ENCODE measurements at regions of chr6 and their contacts with region 1.

Region 1: DNA sequence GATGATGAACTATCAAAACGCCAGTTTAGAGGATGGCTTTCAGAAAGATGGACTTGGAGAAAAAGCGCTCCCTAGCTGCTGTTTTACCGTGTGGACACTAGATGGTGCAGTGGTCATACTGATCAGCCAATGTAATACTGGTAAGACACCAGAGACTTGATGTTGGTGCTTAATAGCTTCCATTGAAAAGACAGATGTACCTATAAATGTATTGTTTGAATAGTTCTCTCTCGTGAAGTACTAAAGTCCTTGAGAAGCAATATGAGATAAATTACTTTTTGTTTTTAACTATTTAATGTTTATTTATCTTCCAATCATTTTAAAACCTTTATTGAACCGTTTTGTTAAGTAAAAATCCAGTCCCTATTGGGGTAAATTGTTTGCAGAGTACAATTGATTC is 63.9 kb upstream of the FUCA2 start:
- DNase-seq: peak; percentile 78
- H3K4me3 ChIP-seq: no peak overlapping the region
- H3K27ac ChIP-seq: no peak overlapping the region
- H3K4me1 ChIP-seq: peaks cover 12% of the 10 kb centered on the region
- H3K27me3 ChIP-seq: no peaks in the 10 kb centered on the region
- CTCF ChIP-seq: peak; percentile 61 to 71
- POLR2A ChIP-seq: no peak

Region 2: DNA sequence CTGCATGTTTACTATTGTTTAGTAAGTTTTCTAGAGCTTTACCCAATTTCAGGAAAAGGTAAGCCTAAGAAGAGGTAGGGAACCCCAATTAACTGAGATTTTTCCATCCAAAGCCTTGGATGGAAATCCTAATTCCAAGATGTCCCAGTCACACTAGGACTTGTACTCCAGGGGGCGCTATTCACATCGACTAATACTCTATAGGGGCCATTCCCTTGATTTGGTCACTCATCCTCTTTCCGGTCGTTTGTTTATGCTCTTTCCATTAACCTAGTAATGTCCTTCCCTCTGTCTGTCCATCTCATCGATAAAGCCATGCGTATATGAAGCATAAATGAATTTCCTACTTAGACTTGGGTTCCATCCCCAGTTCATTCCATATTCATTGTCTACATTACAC is 16.9 kb after region 1 on chr6:
- CTCF ChIA-PET with region 1: interaction called, 16 read pairs
- POLR2A ChIA-PET with region 1: no interaction called
- dilution Hi-C with region 1: no loop called
- intact Hi-C with region 1: no loop called
- DNase-seq: no peak
- H3K4me3 ChIP-seq: no peak overlapping the region
- H3K27ac ChIP-seq: no peak overlapping the region
- H3K4me1 ChIP-seq: no peaks in the 10 kb centered on the region
- H3K27me3 ChIP-seq: no peaks in the 10 kb centered on the region
- CTCF ChIP-seq: peak; percentile 13 to 24
- POLR2A ChIP-seq: no peak

Region 3: GRCh38 chr6:143734641-143735063 is 159.2 kb after region 1 on chr6:
- CTCF ChIA-PET with region 1: interaction called, 6 read pairs
- POLR2A ChIA-PET with region 1: no interaction called
- dilution Hi-C with region 1: no loop called
- intact Hi-C with region 1: loop called (anchors 5 kb)
- DNase-seq: peak; percentile 82
- H3K4me3 ChIP-seq: no peak overlapping the region
- H3K27ac ChIP-seq: no peak overlapping the region
- H3K4me1 ChIP-seq: peaks cover 24% of the 10 kb centered on the region
- H3K27me3 ChIP-seq: no peaks in the 10 kb centered on the region
- CTCF ChIP-seq: no peak
- POLR2A ChIP-seq: peak; percentile 57

Region 4: DNA sequence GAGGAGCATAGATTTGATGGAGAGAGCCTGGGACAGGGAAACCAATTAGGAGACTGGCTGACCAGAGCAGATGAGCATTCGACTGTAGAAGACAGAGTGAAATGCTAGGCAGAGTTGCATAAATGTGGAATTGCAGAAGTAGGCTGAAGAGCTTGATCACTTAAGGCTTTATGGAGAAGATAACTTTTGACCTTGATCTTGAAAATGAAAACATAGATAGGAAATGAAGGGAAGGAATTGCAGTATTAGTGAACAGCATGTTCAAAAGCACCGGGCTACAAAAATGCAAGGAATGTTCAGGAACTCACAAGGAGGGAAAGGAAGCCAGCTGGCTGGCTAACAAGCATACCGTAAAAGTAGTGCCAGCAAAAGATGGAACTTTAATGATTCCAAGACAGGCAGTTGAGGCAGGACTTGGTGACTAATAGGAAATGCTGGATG is 247.2 kb after region 1 on chr6:
- CTCF ChIA-PET with region 1: interaction called, 34 read pairs
- POLR2A ChIA-PET with region 1: no interaction called
- dilution Hi-C with region 1: no loop called
- intact Hi-C with region 1: loop called (anchors 2 kb)
- DNase-seq: peak; percentile 93
- H3K4me3 ChIP-seq: no peak overlapping the region
- H3K27ac ChIP-seq: peak overlapping the region; percentile 93
- H3K4me1 ChIP-seq: peaks cover 54% of the 10 kb centered on the region
- H3K27me3 ChIP-seq: no peaks in the 10 kb centered on the region
- CTCF ChIP-seq: no peak
- POLR2A ChIP-seq: peak; percentile 57

Region 5: GRCh38 chr6:143940011-143940597 is 364.7 kb after region 1 on chr6:
- CTCF ChIA-PET with region 1: interaction called, 20 read pairs
- POLR2A ChIA-PET with region 1: no interaction called
- dilution Hi-C with region 1: no loop called
- intact Hi-C with region 1: loop called (anchors 1 kb)
- DNase-seq: peak; percentile 45
- H3K4me3 ChIP-seq: no peak overlapping the region
- H3K27ac ChIP-seq: no peak overlapping the region
- H3K4me1 ChIP-seq: no peaks in the 10 kb centered on the region
- H3K27me3 ChIP-seq: peaks cover under 1 to 7% of the 10 kb centered on the region in 2 experiments
- CTCF ChIP-seq: peak; percentile 59 to 60
- POLR2A ChIP-seq: no peak

Region 6: DNA sequence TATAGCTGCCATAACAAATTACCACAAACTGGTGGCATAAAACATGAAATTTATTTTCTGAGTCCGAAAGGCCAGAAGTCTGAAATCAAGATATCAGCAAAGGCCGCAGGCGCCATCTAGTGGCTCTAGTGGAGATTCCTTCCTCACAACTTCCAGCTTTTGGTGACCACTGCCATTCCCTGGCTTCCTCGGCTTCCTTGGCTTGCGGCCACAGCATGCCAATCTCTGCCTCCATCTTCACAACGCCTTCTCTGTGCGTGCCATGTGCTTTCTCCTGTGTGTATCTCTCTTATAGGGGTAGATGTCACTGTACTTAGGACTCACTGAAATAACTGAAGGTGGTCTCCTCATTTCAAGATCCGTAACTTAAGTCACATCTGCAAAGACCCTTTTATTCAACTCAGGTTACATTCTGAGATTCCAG is 438.1 kb after region 1 on chr6:
- CTCF ChIA-PET with region 1: interaction called, 264 read pairs
- POLR2A ChIA-PET with region 1: interaction called, 3 read pairs
- dilution Hi-C with region 1: no loop called
- intact Hi-C with region 1: loop called (anchors 1 kb)
- DNase-seq: peak; percentile 77
- H3K4me3 ChIP-seq: no peak overlapping the region
- H3K27ac ChIP-seq: no peak overlapping the region
- H3K4me1 ChIP-seq: no peaks in the 10 kb centered on the region
- H3K27me3 ChIP-seq: peaks cover 11 to 16% of the 10 kb centered on the region in 2 experiments
- CTCF ChIP-seq: peak; percentile 80 to 83
- POLR2A ChIP-seq: no peak

Region 7: DNA sequence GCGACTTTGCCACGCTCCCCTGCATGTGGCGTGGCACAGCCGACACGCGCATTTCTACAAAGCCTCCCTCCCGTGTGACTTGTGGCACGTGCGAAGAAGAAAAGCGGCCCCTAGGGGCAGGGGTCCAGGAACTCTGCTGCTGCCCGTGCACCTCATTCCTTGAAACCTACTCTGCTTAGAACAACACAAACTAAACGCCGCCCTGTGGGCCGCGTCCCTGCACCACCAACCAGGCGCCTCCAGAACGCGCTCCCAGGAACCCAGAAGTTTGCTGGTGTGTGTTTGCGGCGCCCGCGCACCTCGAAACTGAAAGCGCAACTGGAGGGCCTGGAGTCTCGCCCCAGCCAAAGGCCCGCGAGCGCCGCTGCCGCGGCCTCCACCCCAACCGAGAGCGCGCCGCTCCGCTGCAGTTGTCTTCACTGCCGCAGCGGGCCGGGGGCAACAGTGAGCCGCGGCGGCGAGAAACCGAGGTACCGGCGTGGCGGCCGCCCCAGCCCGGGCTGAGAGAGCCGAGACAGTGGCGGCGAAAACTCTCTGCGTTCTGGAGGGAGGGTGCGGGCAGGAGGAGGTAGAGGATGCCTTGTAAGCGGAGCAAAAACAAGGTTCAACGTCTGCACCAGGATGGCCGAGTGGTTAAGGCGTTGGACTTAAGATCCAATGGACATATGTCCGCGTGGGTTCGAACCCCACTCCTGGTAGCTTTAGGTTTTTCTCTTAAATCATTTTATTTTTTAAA is 640.7 kb after region 1 on chr6:
- CTCF ChIA-PET with region 1: interaction called, 10 read pairs
- POLR2A ChIA-PET with region 1: no interaction called
- dilution Hi-C with region 1: no loop called
- intact Hi-C with region 1: loop called (anchors 2 kb)
- DNase-seq: peak; percentile 100
- H3K4me3 ChIP-seq: peak overlapping the region; percentile 35 to 56 (median 45)
- H3K27ac ChIP-seq: peak overlapping the region; percentile 17
- H3K4me1 ChIP-seq: peaks cover 14% of the 10 kb centered on the region
- H3K27me3 ChIP-seq: no peaks in the 10 kb centered on the region
- CTCF ChIP-seq: peak; percentile 81 to 85
- POLR2A ChIP-seq: peak; percentile 50